IMR-90 (cell line): ENCODE measurements at regions of chr18 and their contacts with region 1.

Region 1: DNA sequence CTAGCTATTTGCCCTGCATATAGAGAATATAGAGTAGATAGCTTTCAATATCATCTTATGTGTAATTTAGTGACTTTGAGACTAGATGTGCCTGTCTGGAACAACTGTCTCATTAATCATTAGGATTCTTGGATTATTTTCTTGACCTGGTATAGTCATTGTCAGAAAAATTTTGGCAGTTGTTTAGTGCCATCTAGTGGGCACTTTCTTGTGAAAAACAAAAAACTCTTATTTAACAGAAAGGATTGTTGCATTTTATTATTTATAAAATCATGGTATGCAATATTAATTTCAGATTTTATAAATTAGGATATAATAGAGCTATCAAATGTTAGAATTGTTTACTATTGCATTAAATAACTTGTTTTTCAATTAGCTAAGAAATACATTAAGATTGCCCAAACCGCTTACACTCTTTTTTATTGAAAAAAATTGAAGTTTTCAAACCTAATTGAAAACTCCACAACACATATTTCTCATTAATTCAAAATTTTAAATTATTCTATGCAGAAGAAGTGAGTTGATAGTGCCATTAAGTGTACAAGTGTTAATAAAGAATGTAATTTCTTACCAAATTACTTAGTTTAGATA is 80.3 kb downstream of the DYNAP start:
- DNase-seq: peak; percentile 42
- ATAC-seq: no peak
- H3K4me3 ChIP-seq: no peak overlapping the region
- H3K27ac ChIP-seq: no peak overlapping the region
- H3K4me1 ChIP-seq: 0 out of 2 replicates have a peak, but pooled peaks cover 2% of the 10 kb centered on the region
- H3K27me3 ChIP-seq: no peaks in the 10 kb centered on the region
- CTCF ChIP-seq: peak; percentile 60
- POLR2A ChIP-seq: no peak
- RAD21 ChIP-seq: peak; percentile 62

Region 2: GRCh38 chr18:53567929-53568574 is 1103.3 kb before region 1 on chr18:
- CTCF ChIA-PET with region 1: no interaction called
- POLR2A ChIA-PET with region 1: no interaction called
- dilution Hi-C with region 1: no loop called
- in situ Hi-C with region 1: no loop called
- intact Hi-C with region 1: loop called (anchors 5 kb)
- DNase-seq: peak; percentile 13
- ATAC-seq: peak; percentile 32; the same call in 1 of the 2 replicates
- H3K4me3 ChIP-seq: no peak overlapping the region
- H3K27ac ChIP-seq: no peak overlapping the region
- H3K4me1 ChIP-seq: no peaks in the 10 kb centered on the region
- H3K27me3 ChIP-seq: no peaks in the 10 kb centered on the region
- CTCF ChIP-seq: peak; percentile 49
- POLR2A ChIP-seq: no peak
- RAD21 ChIP-seq: peak; percentile 24; the same call in 1 of the 2 replicates

Region 3: DNA sequence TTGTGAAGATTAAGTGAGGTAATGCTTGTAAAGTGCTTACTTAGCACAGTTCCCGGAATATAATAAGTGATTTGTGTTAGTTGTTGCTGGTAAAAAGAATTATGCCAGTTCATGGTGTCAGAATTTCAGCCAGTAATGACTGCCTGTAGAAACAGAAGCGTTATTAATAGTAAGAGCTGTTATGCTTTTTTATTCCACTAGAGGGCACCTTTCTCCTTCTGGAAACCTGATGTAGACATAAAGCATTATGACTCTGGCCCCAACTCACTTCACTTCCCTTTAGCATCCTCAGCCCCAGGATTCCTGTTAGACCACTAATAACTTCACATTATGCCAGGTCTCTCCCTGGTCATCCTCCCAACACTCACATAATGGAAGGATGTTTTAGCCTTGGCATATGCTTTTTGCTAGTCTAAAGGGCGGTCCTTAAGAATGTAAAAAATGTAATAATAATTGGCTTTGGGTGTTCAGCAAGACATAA is 278.8 kb before region 1 on chr18:
- CTCF ChIA-PET with region 1: no interaction called
- POLR2A ChIA-PET with region 1: no interaction called
- dilution Hi-C with region 1: no loop called
- in situ Hi-C with region 1: no loop called
- intact Hi-C with region 1: loop called (anchors 1 kb)
- DNase-seq: peak; percentile 63
- ATAC-seq: peak; percentile 71
- H3K4me3 ChIP-seq: no peak overlapping the region
- H3K27ac ChIP-seq: no peak overlapping the region
- H3K4me1 ChIP-seq: no peaks in the 10 kb centered on the region
- H3K27me3 ChIP-seq: no peaks in the 10 kb centered on the region; the same call in 1 of the 2 replicates
- CTCF ChIP-seq: peak; percentile 73
- POLR2A ChIP-seq: no peak
- RAD21 ChIP-seq: peak; percentile 58

Region 4: GRCh38 chr18:54444319-54444914 is 227.0 kb before region 1 on chr18:
- CTCF ChIA-PET with region 1: interaction called, 8 read pairs
- POLR2A ChIA-PET with region 1: no interaction called
- dilution Hi-C with region 1: no loop called
- in situ Hi-C with region 1: no loop called
- intact Hi-C with region 1: loop called (anchors 1 kb)
- DNase-seq: peak; percentile 61
- ATAC-seq: peak; percentile 94
- H3K4me3 ChIP-seq: no peak overlapping the region
- H3K27ac ChIP-seq: no peak overlapping the region
- H3K4me1 ChIP-seq: no peaks in the 10 kb centered on the region
- H3K27me3 ChIP-seq: peaks cover 2% of the 10 kb centered on the region
- CTCF ChIP-seq: peak; percentile 73
- POLR2A ChIP-seq: no peak
- RAD21 ChIP-seq: peak; percentile 75

Region 5: DNA sequence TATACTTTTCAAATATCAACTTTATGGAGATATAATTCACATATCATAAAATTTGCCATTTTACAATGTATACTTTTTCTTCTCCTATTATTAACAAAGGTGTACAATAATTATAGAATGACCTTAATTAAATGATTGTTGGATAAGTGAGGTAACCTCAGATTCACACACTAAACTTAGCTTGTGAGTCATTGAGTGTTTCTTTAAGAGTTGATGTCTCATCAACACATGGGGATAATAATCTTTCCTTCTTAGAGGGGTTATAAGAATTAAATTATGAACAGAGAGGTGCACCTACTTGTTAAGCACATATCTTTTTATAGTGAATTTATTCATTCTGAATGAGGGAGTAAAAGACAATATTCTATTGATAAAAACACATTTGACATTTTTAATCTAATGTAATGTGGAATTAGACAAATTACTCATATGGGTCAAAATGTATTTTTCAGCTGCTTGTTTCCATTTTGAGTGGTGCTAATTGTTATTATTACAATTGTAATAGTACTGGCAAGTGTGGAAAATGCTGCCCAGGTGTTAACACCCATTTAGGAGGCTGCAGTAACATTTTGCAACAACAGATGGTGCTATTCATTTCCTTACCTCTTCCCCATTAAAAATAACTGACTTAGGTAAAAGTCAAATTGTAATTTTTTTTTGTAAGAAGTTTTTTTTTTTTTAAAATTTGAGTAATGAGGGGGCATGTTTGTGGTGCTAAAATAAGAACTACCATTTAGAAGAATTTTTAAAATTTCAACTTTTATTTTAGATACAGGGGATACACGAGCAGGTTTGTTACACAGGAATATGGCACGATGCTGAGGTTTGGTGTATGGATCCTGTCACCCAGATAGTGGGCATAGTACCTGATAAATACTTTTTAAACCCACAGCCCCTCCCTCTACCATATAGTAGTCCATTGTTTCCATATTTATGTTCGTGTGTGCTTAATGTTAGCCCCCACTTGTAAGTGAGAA is 112.5 kb before region 1 on chr18:
- CTCF ChIA-PET with region 1: no interaction called
- POLR2A ChIA-PET with region 1: no interaction called
- dilution Hi-C with region 1: no loop called
- in situ Hi-C with region 1: no loop called
- intact Hi-C with region 1: loop called (anchors 2 kb)
- DNase-seq: peak; percentile 3
- ATAC-seq: no peak
- H3K4me3 ChIP-seq: no peak overlapping the region
- H3K27ac ChIP-seq: no peak overlapping the region
- H3K4me1 ChIP-seq: no peaks in the 10 kb centered on the region
- H3K27me3 ChIP-seq: no peaks in the 10 kb centered on the region
- CTCF ChIP-seq: peak; percentile 57
- POLR2A ChIP-seq: no peak
- RAD21 ChIP-seq: peak; percentile 42

Region 6: GRCh38 chr18:56148373-56148772 is 1477.0 kb after region 1 on chr18:
- CTCF ChIA-PET with region 1: no interaction called
- POLR2A ChIA-PET with region 1: no interaction called
- dilution Hi-C with region 1: no loop called
- in situ Hi-C with region 1: no loop called
- intact Hi-C with region 1: no loop called
- DNase-seq: peak; percentile 97
- ATAC-seq: peak; percentile 91
- H3K4me3 ChIP-seq: no peak overlapping the region
- H3K27ac ChIP-seq: no peak overlapping the region
- H3K4me1 ChIP-seq: peaks cover 3% of the 10 kb centered on the region; the same call in 1 of the 2 replicates
- H3K27me3 ChIP-seq: no peaks in the 10 kb centered on the region
- CTCF ChIP-seq: no peak
- POLR2A ChIP-seq: no peak
- RAD21 ChIP-seq: peak; percentile 14; the same call in 1 of the 2 replicates